ENCODE measurements at regions of chr22 and their contacts with region 1.

Region 1: GRCh38 chr22:22463855-22464540 is 44.5 kb downstream of the ZNF280B start:
- DNase-seq: peak; percentile 58
- CTCF ChIP-seq: peak; percentile 60

Region 2: GRCh38 chr22:21866833-21867527 is 597.0 kb before region 1 on chr22:
- CTCF ChIA-PET with region 1: no interaction called
- POLR2A ChIA-PET with region 1: no interaction called
- DNase-seq: no peak
- CTCF ChIP-seq: no peak

Region 3: DNA sequence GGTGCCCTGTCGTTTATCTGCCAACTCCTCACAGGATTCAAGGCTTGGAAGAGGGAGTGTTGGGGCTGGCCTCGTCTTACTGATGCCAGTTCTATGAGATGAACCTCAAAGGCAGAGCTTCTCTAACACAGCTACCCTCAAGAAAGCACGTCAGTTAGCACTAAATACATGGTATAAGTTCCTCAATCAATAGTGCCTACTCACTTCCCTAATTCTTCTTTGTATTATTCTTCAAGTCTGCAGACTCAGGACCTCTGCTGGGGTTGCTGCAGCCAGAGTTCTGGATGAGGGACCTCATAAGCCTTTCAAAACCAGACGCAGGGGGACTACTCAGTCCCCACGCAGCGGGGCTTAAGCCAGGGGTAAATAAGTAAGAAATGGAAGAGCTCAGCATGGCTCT is 101.1 kb before region 1 on chr22:
- CTCF ChIA-PET with region 1: no interaction called
- POLR2A ChIA-PET with region 1: no interaction called
- DNase-seq: no peak
- CTCF ChIP-seq: no peak

Region 4: GRCh38 chr22:22397277-22397870 is 66.6 kb before region 1 on chr22:
- CTCF ChIA-PET with region 1: no interaction called
- POLR2A ChIA-PET with region 1: no interaction called
- DNase-seq: peak; percentile 3
- CTCF ChIP-seq: no peak

Region 5: DNA sequence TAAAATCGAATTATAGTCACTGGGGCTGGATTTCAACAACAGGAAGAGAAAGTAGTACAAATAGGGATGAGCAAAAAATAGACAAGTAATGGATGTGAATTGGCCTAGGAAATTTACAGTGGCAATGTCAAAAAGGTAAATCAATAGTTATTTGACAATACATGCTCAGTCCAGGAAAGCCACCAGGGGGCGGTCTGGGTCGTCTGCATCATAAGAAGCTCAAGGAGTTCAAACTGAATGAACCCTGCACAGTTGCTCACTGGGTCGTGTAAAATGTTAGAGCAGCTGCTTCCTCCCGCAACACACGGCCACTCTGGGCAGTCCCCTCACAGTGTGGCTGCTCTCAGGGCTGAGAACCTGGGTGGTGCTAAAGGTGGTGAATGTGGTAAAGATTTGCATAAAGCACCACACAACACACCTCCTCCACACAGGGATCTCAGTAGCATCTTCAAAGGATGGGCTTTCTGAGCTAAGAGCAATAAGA is 41.3 kb before region 1 on chr22:
- CTCF ChIA-PET with region 1: interaction called, 23 read pairs
- POLR2A ChIA-PET with region 1: no interaction called
- DNase-seq: peak; percentile 88
- CTCF ChIP-seq: peak; percentile 73

Region 6: DNA sequence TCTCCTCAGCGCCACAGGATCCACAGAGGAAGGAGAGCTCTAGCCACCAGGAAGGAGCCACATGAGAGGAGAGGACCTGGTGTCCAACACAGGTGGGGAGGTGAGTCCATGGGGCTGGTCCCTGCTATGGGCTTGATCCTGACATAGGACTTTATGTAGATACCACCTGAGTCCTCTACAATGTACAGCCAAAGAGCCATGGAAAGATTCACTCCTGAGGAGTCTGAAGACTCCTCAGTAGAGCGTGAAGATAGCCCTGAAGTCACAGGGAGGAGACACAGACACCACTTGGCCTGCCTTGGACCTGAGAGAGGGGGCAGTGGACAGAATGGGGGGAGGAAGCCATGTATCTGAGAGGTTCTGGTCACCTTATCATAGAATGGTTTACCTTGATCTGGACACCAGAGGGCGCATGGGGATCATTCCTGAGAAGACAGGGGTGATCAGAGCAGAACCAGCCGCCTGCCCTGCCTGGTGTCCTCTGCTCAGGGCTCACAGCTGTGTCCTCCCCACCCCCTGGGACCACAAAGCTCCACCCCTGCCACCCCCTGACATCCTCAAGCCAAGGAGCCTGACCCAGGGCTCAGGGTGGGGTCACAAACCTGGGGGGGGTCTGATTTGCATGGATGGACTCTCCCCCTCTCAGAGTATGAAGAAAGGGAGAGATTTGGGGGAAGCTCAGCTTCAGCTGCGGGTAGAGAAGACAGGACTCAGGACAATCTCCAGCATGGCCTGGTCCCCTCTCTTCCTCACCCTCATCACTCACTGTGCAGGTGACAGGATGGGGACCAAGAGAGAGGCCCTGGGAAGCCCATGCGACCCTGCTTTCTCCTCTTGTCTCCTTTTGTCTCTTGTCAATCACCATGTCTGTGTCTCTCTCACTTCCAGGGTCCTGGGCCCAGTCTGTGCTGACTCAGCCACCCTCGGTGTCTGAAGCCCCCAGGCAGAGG is 32.5 kb before region 1 on chr22:
- CTCF ChIA-PET with region 1: interaction called, 11 read pairs
- POLR2A ChIA-PET with region 1: no interaction called
- DNase-seq: peak; percentile 84
- CTCF ChIP-seq: peak; percentile 52

Region 7: DNA sequence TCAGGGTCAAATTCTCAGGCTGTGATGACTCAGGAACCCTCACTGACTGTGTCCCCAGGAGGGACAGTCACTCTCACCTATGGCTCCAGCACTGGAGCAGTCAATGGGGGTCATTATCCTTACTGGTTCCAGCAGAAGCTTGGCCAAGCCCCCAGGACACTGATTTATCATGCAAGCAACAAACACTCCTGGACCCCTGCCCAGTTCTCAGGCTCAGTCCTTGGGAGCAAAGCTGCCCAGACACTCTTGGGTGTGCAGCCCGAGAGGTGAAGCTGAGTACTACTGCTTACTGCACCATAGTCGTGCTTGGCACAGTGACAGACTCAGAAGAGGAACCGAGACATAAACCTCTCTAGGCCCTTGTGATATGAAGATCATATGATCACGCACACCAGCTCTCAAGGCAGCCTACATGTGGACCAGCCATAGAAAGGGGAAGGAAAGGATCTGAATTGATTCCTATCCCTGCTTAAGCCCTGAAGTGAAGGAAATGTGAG is 13.6 kb before region 1 on chr22:
- CTCF ChIA-PET with region 1: interaction called, 29 read pairs
- POLR2A ChIA-PET with region 1: no interaction called
- DNase-seq: peak; percentile 78
- CTCF ChIP-seq: peak; percentile 4

Region 8: DNA sequence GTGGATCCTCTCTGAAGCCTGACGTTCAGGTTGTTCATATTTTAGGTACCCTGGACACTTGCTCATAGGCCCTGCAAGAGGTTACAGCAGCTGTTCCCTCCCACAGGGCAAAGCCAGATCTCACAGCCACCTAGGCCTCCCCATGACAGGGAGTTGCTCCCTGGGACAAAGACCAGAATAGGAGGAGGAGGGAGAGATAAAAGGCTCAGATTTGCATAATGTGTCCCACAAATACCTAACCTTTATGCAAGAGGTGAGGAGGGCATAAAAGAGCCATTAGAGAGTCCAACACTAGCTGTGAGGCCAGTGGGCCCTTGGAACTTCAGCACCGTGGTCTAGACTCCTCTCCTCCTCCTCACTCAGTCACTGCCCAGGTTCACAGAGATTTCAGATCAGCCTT is 10.7 kb after region 1 on chr22:
- CTCF ChIA-PET with region 1: interaction called, 20 read pairs
- POLR2A ChIA-PET with region 1: no interaction called
- DNase-seq: no peak
- CTCF ChIP-seq: no peak

Region 9: GRCh38 chr22:22692707-22693530 is 228.9 kb after region 1 on chr22:
- CTCF ChIA-PET with region 1: interaction called, 10 read pairs
- POLR2A ChIA-PET with region 1: no interaction called
- DNase-seq: peak; percentile 70
- CTCF ChIP-seq: peak; percentile 47